Left cardiac atrium (tissue), 4 donors: ENCODE measurements at regions of chr5 and their contacts with region 1.

Region 1: GRCh38 chr5:112921833-112922817 is at the start of gene REEP5:
- DNase-seq: peak; percentile 89
- ATAC-seq: peak; percentile 95 to 97
- total RNA-seq, gene REEP5: 105 to 135 TPM

Region 2: GRCh38 chr5:112811023-112811422 is 111.1 kb before region 1 on chr5:
- intact Hi-C with region 1: no loop called
- DNase-seq: no peak
- ATAC-seq: peak; percentile 86 to 92

Region 3: GRCh38 chr5:112860929-112861637 is 61.0 kb before region 1 on chr5 and contains the start of gene SRP19:
- intact Hi-C with region 1: loop called in 1 of 2 experiments (anchors 10 kb)
- DNase-seq: peak; percentile 96
- ATAC-seq: peak; percentile 97 to 98
- total RNA-seq, gene SRP19: 28.5 to 39.6 TPM

Region 4: DNA sequence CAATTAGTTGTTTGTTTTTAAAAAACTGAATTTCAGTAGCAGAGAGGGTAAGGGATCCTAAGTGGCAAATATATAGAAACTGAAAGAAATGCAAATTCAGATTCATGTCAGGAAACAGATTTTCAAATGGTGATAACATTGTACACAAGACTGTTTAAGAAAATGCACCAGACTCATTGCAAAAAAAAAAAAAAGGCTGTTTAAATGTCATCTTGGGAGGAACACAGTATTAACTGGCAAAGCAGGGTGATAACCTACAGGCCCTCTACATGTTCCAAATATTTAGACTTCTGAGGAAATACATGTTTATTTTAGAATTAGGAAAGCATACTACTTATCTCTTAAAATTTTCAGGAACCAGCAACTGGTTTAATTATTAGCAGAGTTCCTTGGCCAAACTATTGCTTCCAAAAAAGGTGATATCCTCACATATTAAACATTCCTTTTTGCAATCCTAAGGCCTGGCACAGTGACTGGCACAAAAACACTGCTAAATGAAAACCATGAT is 398.2 kb after region 1 on chr5:
- intact Hi-C with region 1: no loop called
- DNase-seq: no peak
- ATAC-seq: no peak